ENCODE measurements at regions of chr10 and their contacts with region 1.

Region 1: DNA sequence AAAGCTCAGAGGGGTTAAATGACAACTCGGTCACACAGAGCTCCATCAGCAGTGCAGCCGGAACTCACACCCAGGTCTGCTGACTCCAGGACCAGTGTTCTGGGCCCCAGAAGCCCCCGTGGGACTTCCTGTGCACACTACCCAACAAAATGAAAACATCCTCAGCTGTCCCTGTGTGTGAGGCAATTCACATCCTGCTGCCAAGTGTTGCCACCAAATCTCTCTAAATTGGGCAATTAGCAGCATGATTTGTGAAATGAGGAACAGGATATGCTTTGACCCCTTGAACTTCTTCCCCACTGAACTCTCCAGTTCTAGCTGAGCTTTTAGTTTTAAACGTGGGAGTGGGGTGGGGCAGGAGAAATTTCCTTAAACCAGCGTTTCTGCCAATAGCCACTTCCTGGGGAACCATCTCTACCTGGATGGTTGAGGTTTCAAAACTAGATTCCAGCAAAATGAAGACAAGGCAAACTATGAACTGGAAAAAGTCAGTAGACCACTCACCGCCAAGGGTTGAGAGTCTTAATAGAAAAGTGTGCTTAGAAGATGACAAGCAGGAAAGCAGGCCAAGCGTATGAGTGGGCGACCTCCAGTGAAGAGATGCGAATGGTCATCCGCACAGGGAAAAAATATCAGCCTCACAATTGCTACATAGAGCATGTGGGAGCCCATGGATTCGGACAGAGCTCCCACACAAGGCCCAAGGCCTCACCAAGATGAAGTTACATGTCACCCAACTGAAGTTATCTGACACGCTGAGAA is 51.9 kb upstream of the CHST15 start:
- DNase-seq: peak; percentile 95 to 97 (median 96)
- H3K4me3 ChIP-seq: peak overlapping the region in 1 of 3 experiments; percentile 42
- H3K4me3 Mint-ChIP-seq: peak overlapping the region in 1 of 2 donors; percentile 51
- H3K27ac ChIP-seq: peak overlapping the region; percentile 96 to 99
- H3K27ac Mint-ChIP-seq: no peak overlapping the region
- H3K4me1 ChIP-seq: peaks cover 72 to 80% of the 10 kb centered on the region in 2 donors
- H3K4me1 Mint-ChIP-seq: peaks cover 48% of the 10 kb centered on the region
- H3K27me3 ChIP-seq: no peaks in the 10 kb centered on the region
- H3K27me3 Mint-ChIP-seq: peaks cover 0 to 16% (median 2%) of the 10 kb centered on the region in 3 donors
- CTCF ChIP-seq: no peak

Region 2: DNA sequence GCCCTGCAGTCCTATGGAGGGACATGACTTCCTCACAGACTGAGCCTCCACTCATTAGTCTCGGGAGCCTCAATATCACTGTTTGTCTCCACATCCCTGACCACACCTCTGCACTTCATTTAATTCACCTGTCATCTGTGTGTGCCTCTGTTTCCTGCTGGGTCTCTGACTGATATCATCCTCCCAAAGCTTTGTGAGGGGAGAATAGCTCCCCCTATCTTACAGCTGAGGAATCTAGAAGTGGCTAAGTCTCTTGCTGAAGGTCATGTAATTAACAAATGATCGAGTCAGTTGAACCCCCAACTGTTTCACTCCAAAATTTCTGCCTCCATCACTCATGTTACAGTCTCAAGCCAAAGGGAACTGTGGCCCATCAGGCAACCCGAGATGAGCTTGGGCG is 248.1 kb before region 1 on chr10:
- intact Hi-C with region 1: no loop called
- DNase-seq: no peak
- H3K4me3 ChIP-seq: no peak overlapping the region
- H3K4me3 Mint-ChIP-seq: no peak overlapping the region
- H3K27ac ChIP-seq: no peak overlapping the region
- H3K27ac Mint-ChIP-seq: no peak overlapping the region
- H3K4me1 ChIP-seq: no peaks in the 10 kb centered on the region
- H3K4me1 Mint-ChIP-seq: no peaks in the 10 kb centered on the region
- H3K27me3 ChIP-seq: peaks cover 1 to 8% of the 10 kb centered on the region in 2 donors
- H3K27me3 Mint-ChIP-seq: peaks cover 14 to 18% (median 16%) of the 10 kb centered on the region in 3 donors
- CTCF ChIP-seq: no peak

Region 3: DNA sequence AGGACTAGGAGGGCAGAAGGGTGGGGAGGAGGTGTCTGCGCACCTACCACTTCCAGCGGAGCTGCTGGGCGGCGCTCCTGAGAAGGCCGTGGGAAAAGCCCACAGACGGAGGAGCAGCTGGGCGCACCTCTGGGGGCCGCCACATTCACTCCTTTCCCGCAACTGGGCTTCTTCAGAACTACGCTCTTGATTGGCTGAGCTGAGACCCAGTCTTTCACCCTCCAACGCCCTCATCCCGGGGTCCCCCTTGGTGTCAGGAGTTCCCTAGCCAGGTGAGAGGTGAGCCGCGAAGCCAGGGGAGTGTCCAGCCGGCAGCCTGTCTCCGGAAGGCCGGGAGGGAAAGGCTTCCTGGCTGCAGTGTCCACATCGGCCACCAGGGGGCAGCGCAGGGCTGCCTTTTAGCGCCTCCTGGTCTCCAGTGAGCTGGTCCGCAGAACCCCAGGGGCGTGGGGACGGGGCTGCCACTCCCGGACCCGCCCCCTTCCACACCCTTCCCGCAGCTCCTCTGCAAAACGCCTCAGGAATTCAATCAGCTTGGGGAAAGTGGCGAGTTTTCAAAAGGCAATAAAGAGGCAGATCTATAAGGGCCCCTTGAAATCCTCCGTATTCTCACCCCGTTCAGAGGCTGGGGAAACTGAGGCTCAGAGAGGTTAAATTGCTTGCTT is 150.7 kb before region 1 on chr10:
- intact Hi-C with region 1: loop called (anchors 1 to 2 kb)
- DNase-seq: peak; percentile 81 to 83 (median 81)
- H3K4me3 ChIP-seq: peak overlapping the region; percentile 21 to 75 (median 28)
- H3K4me3 Mint-ChIP-seq: peak overlapping the region; percentile 74 to 79
- H3K27ac ChIP-seq: peak overlapping the region in 1 of 2 donors; percentile 98
- H3K27ac Mint-ChIP-seq: peak overlapping the region; percentile 57 to 100 (median 98)
- H3K4me1 ChIP-seq: peaks cover 56 to 64% of the 10 kb centered on the region in 2 donors
- H3K4me1 Mint-ChIP-seq: peaks cover 63% of the 10 kb centered on the region
- H3K27me3 ChIP-seq: peaks cover 31 to 46% of the 10 kb centered on the region in 2 donors
- H3K27me3 Mint-ChIP-seq: peaks cover 47 to 58% (median 51%) of the 10 kb centered on the region in 3 donors
- CTCF ChIP-seq: peak; percentile 98

Region 4: GRCh38 chr10:124010563-124011131 is 134.6 kb before region 1 on chr10:
- intact Hi-C with region 1: no loop called
- DNase-seq: no peak
- H3K4me3 ChIP-seq: no peak overlapping the region
- H3K4me3 Mint-ChIP-seq: no peak overlapping the region
- H3K27ac ChIP-seq: no peak overlapping the region
- H3K27ac Mint-ChIP-seq: no peak overlapping the region
- H3K4me1 ChIP-seq: peaks cover 21 to 22% of the 10 kb centered on the region in 2 donors
- H3K4me1 Mint-ChIP-seq: peaks cover 20% of the 10 kb centered on the region
- H3K27me3 ChIP-seq: peaks cover 0 to 6% of the 10 kb centered on the region in 2 donors
- H3K27me3 Mint-ChIP-seq: peaks cover 12 to 40% (median 38%) of the 10 kb centered on the region in 3 donors
- CTCF ChIP-seq: no peak

Region 5: DNA sequence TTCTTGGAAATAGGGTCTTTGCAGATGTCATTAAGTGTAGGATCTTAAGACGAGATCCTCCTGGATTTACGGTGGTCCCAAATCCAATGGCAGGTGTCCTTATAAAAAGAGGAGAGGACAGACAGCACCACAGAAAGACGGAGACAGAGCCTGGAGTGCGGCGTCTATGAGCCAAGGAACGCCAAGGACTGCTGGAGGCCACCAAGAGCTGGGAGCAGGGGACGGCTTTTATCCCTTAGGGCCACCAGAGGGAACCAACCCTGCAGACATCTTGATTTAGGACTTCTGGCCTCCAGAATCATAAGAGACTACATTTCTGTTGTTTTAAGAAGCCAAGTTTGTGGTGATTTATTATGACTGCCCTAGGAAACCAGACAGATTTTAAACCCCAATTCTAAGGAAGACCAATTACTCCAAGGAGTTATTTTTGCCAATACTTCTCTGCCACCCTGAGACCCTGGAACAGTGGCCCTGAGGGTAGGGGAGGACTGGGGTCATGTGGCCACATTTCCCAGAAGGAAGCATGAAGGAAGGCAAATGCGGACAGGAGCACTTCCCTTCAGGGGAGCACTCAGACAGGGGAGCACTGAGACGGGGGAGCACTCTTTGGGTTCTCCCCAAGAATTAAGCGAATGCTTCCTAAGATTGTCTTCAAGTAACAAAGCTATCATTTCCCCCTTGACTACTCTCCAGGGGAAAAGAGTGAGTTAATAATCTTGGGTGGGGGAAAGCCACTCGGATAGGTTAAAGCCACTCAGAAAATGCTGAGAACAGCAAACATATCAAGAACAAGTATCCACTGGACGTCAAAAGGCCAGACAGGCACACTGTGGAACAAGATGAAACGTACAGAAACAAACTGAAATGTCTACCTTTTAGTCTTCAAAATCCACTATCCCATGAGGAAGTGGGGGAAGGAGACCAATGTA is 119.4 kb before region 1 on chr10:
- intact Hi-C with region 1: loop called in 1 of 2 experiments (anchors 10 kb)
- DNase-seq: peak; percentile 56 to 68 (median 66)
- H3K4me3 ChIP-seq: no peak overlapping the region
- H3K4me3 Mint-ChIP-seq: peak overlapping the region in 1 of 2 donors; percentile 30
- H3K27ac ChIP-seq: no peak overlapping the region
- H3K27ac Mint-ChIP-seq: peak overlapping the region in 6 of 7 donors; percentile 8 to 81 (median 69)
- H3K4me1 ChIP-seq: peaks cover 12 to 38% of the 10 kb centered on the region in 2 donors
- H3K4me1 Mint-ChIP-seq: peaks cover 29% of the 10 kb centered on the region
- H3K27me3 ChIP-seq: peaks cover 0 to 16% of the 10 kb centered on the region in 2 donors
- H3K27me3 Mint-ChIP-seq: peaks cover 5 to 37% (median 35%) of the 10 kb centered on the region in 3 donors
- CTCF ChIP-seq: peak; percentile 69

Region 6: GRCh38 chr10:124035928-124036558 is 109.2 kb before region 1 on chr10:
- intact Hi-C with region 1: loop called in 1 of 2 experiments (anchors 2 kb)
- DNase-seq: peak; percentile 96 to 98 (median 96)
- H3K4me3 ChIP-seq: peak overlapping the region in 1 of 3 experiments; percentile 39
- H3K4me3 Mint-ChIP-seq: peak overlapping the region; percentile 66 to 75
- H3K27ac ChIP-seq: peak overlapping the region; percentile 63 to 88
- H3K27ac Mint-ChIP-seq: peak overlapping the region; percentile 97 to 100 (median 99)
- H3K4me1 ChIP-seq: peaks cover 83% of the 10 kb centered on the region in 2 donors
- H3K4me1 Mint-ChIP-seq: peaks cover 76% of the 10 kb centered on the region
- H3K27me3 ChIP-seq: no peaks in the 10 kb centered on the region
- H3K27me3 Mint-ChIP-seq: peaks cover 0 to 8% (median 4%) of the 10 kb centered on the region in 3 donors
- CTCF ChIP-seq: no peak

Region 7: DNA sequence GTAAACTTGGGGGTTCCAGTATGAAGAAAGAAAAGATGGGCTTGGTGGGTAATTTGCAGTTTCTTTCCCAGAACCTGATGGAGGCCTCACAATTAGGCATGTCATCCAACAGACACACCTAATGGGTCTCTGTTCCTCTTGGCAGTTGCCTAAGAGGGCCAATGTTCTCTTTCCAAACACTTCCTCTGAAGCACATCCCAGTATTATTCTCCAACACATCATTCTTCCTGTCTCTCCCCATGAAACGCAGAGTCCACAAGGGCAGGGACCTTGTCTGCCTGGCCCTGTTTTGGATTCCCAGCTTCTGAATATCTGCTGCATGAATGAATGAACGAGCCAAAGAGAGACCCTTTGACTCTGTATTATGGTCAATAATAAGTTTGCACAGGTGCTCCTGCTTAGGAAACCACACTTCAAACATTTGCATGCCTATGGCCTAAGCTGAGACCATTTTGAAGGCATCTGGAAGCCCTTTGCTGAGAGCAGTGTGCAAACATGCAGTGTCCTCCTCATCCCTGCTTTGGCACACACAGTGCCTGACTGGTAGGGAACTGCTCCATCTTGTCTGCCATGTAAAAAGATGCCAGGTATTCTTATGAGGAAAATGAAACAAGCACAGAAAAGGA is 49.0 kb after region 1 on chr10:
- intact Hi-C with region 1: no loop called
- DNase-seq: no peak
- H3K4me3 ChIP-seq: no peak overlapping the region
- H3K4me3 Mint-ChIP-seq: peak overlapping the region in 1 of 2 donors; percentile 24
- H3K27ac ChIP-seq: no peak overlapping the region
- H3K27ac Mint-ChIP-seq: no peak overlapping the region
- H3K4me1 ChIP-seq: peaks cover 15 to 24% of the 10 kb centered on the region in 2 donors
- H3K4me1 Mint-ChIP-seq: peaks cover 43% of the 10 kb centered on the region
- H3K27me3 ChIP-seq: peaks cover 0 to 2% of the 10 kb centered on the region in 2 donors
- H3K27me3 Mint-ChIP-seq: peaks cover 5 to 23% (median 9%) of the 10 kb centered on the region in 3 donors
- CTCF ChIP-seq: no peak

Region 8: DNA sequence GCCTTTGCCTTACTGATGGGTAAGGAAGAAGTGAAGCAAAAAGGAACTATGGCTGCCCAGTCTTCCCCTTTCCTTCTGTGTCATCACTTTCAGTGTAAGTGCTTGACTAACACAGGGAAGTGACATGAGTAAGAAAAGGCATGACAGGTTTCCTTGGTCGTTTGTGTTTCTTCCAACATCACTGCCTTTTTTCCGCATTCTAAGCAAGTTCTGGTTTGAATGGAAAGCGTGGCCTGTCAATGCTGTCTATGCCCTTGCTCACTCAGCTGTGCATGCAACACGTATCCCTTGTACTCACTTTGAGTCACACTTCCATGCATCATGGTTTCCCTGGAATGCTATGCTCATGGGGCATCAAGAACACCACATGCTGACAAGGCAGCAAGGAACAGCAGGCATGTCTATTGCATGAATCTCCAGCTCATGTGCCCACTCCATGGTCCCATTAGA is 161.7 kb after region 1 on chr10:
- intact Hi-C with region 1: loop called in 1 of 2 experiments (anchors 10 kb)
- DNase-seq: peak; percentile 93 to 98 (median 98)
- H3K4me3 ChIP-seq: no peak overlapping the region
- H3K4me3 Mint-ChIP-seq: no peak overlapping the region
- H3K27ac ChIP-seq: peak overlapping the region; percentile 87 to 91
- H3K27ac Mint-ChIP-seq: peak overlapping the region in 1 of 7 donors; percentile 95
- H3K4me1 ChIP-seq: peaks cover 29 to 37% of the 10 kb centered on the region in 2 donors
- H3K4me1 Mint-ChIP-seq: peaks cover 18% of the 10 kb centered on the region
- H3K27me3 ChIP-seq: no peaks in the 10 kb centered on the region
- H3K27me3 Mint-ChIP-seq: peaks cover 0 to 2% (median 0%) of the 10 kb centered on the region in 3 donors
- CTCF ChIP-seq: no peak